ENCODE measurements at regions of chr3 and their contacts with region 1.

Region 1: GRCh38 chr3:141561426-141562034 is 74.7 kb downstream of the RASA2 start:
- DNase-seq: peak; percentile 45
- ATAC-seq: peak; percentile 60
- H3K4me3 Mint-ChIP-seq: no peak overlapping the region
- H3K27ac Mint-ChIP-seq: peak overlapping the region; percentile 63
- H3K4me1 Mint-ChIP-seq: peaks cover 26% of the 10 kb centered on the region
- H3K27me3 Mint-ChIP-seq: no peaks in the 10 kb centered on the region
- CTCF ChIP-seq: peak; percentile 98

Region 2: DNA sequence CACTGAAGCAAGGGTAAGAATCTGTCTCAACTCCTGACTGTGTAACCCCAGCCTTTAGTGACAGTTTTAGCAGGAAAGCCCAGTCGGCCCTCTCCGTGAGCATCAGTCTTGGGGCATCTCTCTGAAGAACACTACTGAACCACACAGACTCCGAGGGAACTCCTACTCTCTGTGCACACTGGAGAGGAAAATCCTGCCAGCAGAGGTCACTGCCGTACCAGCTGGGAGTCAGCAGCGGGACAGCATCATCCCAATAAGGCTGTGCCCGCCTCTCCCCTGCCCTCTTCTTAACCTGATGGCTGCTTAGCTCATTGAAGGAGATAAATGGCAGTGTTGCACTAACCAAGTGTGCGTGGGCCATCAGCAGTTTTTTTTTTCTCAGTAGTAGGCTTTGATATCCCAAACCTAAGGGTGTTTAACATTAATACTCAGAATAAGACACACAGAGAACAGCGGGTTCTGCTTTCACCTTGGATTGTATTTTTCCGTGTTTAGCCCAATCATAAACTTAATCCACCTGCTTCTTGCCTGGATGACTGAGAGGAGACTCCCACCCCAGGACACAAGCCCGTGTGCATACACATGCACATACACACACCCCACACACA is 101.3 kb before region 1 on chr3:
- CTCF ChIA-PET with region 1: interaction called, 265 read pairs
- POLR2A ChIA-PET with region 1: interaction called, 4 read pairs
- intact Hi-C with region 1: loop called (anchors 1 kb)
- DNase-seq: peak; percentile 96
- ATAC-seq: peak; percentile 100
- H3K4me3 Mint-ChIP-seq: no peak overlapping the region
- H3K27ac Mint-ChIP-seq: no peak overlapping the region
- H3K4me1 Mint-ChIP-seq: peaks cover 11% of the 10 kb centered on the region
- H3K27me3 Mint-ChIP-seq: no peaks in the 10 kb centered on the region
- CTCF ChIP-seq: peak; percentile 93

Region 3: GRCh38 chr3:141477224-141477623 is 84.3 kb before region 1 on chr3:
- CTCF ChIA-PET with region 1: interaction called, 98 read pairs
- POLR2A ChIA-PET with region 1: interaction called, 3 read pairs
- intact Hi-C with region 1: loop called (anchors 1 kb)
- DNase-seq: peak; percentile 24
- ATAC-seq: peak; percentile 64
- H3K4me3 Mint-ChIP-seq: no peak overlapping the region
- H3K27ac Mint-ChIP-seq: no peak overlapping the region
- H3K4me1 Mint-ChIP-seq: peaks cover 40% of the 10 kb centered on the region
- H3K27me3 Mint-ChIP-seq: no peaks in the 10 kb centered on the region
- CTCF ChIP-seq: no peak

Region 4: DNA sequence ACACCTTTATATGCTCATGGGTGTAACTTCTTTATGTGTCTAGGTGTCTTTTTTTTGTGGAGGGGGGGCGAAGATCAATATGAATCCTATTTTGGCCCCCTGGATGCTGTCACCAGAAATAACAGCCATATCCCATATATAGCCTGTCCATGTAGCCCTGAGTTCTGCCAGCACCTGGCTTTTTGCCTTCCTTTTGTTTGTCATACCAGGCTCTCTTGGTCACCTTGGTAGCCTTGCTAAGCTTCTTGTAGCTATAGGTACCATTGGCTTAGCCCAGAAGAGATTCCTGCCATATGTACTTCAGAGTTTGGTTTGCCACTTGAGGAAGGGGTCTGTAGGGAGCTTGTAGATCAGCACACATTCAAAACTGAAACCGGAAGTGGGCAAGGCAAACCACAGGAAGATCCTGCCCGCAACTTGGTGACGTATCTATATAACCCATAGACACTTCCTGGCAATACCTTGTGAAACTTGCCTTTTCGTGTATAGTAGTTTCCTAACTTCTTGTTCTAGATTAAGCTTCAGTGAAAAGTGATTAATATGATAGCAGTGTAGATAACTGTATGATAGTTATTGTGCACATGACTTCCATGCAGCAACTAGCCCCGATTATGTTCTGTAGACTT is 62.8 kb before region 1 on chr3:
- CTCF ChIA-PET with region 1: interaction called, 8 read pairs
- POLR2A ChIA-PET with region 1: interaction called, 15 read pairs
- intact Hi-C with region 1: no loop called
- DNase-seq: peak; percentile 95
- ATAC-seq: peak; percentile 83
- H3K4me3 Mint-ChIP-seq: peak overlapping the region; percentile 63
- H3K27ac Mint-ChIP-seq: peak overlapping the region; percentile 97
- H3K4me1 Mint-ChIP-seq: peaks cover 67% of the 10 kb centered on the region
- H3K27me3 Mint-ChIP-seq: no peaks in the 10 kb centered on the region
- CTCF ChIP-seq: no peak

Region 5: GRCh38 chr3:141575879-141576743 is 14.6 kb after region 1 on chr3:
- CTCF ChIA-PET with region 1: interaction called, 17 read pairs
- POLR2A ChIA-PET with region 1: no interaction called
- intact Hi-C with region 1: no loop called
- DNase-seq: no peak
- ATAC-seq: peak; percentile 77
- H3K4me3 Mint-ChIP-seq: peak overlapping the region; percentile 21
- H3K27ac Mint-ChIP-seq: peak overlapping the region; percentile 89
- H3K4me1 Mint-ChIP-seq: peaks cover 20% of the 10 kb centered on the region
- H3K27me3 Mint-ChIP-seq: no peaks in the 10 kb centered on the region
- CTCF ChIP-seq: peak; percentile 59

Region 6: DNA sequence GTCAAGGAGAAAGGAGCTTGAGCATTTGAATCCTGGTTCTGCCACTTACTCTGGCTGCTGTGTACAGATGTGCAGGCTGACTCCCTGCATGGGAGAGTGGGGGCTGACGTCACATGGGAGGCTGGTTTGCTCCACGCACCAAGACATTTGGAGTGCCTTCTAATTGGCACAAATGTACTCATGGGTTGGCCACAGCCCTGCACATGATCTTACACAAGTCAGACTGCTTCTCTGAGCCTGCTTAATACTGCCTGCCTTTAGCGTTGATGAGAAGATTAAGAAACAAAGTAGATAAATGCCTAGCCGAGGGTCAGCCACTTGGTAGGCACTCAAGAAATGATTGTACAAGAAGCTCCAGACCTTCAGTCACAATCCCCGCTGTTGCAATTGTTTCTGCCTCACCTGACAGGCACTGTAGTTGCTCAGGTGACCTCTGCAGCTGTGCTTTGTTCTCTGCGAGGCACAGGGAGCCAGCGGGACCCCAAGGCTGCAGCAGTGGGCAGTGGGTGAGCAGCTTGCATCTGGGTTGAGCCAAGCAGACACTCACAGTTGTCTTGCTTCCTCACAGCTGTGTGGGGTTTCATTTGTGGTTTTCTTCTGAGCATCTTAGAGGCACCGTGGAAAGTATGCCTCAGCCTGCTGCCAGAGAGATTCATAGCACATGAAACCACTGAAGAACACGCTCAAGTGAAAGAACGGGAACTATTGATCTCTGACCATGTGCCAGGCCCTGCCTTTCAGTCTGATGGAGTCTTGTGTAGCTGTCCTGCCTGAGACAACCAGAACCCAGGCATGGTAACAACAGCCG is 234.8 kb after region 1 on chr3:
- CTCF ChIA-PET with region 1: no interaction called
- POLR2A ChIA-PET with region 1: no interaction called
- intact Hi-C with region 1: no loop called
- DNase-seq: peak; percentile 94
- ATAC-seq: peak; percentile 80
- H3K4me3 Mint-ChIP-seq: peak overlapping the region; percentile 85
- H3K27ac Mint-ChIP-seq: peak overlapping the region; percentile 99
- H3K4me1 Mint-ChIP-seq: peaks cover 51% of the 10 kb centered on the region
- H3K27me3 Mint-ChIP-seq: no peaks in the 10 kb centered on the region
- CTCF ChIP-seq: no peak

Measured in activated CD8-positive, alpha-beta T cell treated with anti-CD3 and anti-CD28 coated beads for 36 hours (primary cell).